ENCODE measurements at regions of chr4 and their contacts with region 1.

Region 1: DNA sequence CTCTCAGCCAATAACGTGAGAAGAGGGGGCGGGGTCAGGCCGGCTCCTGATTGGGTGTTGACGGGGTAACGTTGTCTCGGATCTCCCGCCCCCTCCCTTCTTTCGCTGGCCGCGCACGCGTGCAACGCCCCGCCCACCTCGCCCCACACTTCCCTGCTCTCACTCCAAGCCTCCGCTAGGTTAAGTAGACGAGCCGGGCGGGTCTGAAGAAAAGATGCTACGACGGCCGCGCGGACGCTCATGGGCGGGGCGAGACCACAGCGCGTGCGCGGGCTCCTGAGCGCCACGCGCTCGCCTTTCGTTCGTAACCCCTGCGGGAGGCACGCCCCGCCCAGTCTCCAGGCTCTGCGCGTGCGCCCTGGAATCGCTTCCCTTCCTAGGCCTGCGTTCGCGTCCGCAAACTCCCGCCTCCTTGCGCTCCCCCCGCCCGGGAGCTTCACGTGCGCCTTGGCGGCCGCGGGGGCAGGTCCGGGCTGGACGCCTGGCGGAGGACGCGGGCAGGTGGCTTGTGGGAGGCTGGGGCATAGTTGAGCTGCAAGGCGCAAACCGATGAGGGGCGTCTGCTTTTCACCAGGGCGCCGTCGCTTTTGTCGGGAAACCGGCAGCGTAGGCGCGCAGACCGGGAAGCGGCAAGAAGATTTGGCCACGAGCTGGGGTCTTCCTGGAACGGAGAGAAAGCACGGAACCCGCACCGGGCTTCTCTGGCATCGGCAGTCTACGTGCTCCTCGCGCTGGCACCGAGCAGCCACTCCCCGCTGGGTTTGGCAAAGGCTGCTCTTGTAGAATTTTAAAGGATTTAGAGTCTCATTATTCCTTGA is 467 bp upstream of the PGRMC2 start:
- DNase-seq: peak; percentile 97
- ATAC-seq: peak; percentile 86
- H3K4me3 ChIP-seq: peak overlapping the region; percentile 81
- H3K27ac ChIP-seq: peak overlapping the region; percentile 87
- H3K4me1 ChIP-seq: no peaks in the 10 kb centered on the region
- H3K27me3 ChIP-seq: no peaks in the 10 kb centered on the region
- CTCF ChIP-seq: peak in 1 of 3 experiments; percentile 2; a peak in 1 of 6 replicates
- EP300 ChIP-seq: 0 out of 4 replicates have a peak, but pooled peaks of 1 of the 2 experiments have one; percentile 52
- POLR2A ChIP-seq: peak; percentile 93
- RAD21 ChIP-seq: no peak

Region 2: DNA sequence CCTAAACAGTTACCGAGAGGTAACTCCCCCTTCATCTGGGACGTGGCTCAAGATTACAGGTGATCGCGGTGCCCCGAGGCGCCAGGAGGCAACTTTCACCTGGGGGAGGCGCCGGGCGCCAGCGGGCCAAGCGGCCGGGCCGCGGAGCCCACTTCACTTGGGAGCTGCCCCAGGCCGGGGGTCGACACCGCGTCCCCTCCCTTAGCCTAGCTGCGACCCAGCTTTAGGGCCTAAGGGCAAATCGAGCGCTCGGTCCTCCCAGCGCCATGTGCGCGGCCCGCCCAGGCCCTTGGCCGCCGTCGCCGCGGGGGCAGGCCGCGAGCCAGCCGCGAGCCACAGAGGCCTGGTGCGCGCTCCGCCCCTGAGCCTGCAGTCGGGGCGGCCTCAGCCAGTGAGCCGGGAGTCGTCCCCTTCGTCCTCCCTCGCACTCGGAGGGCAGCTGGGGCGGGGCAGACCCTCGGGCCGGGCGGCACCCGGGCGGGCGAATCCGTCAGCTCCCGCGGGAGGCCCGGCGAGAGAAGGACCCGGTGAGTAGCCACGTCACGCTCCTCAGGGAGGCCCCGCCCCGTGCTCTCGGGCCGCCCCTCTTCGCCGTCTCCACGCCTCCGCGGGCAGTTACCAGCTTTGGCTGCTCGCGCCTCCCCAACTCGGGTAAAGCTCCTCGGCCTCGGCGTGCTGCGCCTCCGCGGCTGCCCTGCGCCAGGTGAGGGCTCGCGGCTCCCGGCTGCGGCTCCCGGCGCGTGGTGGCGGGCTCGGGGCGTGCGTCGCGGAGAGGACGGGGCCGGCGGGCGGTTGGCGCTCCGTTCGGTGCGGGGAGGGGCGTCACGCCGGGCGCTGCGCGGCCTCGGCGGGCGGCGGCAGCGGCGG is 227.1 kb before region 1 on chr4 and contains the start of gene LARP1B:
- CTCF ChIA-PET with region 1: interaction called, 4 read pairs
- POLR2A ChIA-PET with region 1: interaction called, 3 read pairs
- RAD21 ChIA-PET with region 1: no interaction called
- SMC1A ChIA-PET with region 1: no interaction called
- in situ Hi-C with region 1: no loop called
- intact Hi-C with region 1: loop called (anchors 5 kb)
- DNase-seq: peak; percentile 74
- ATAC-seq: peak; percentile 91
- H3K4me3 ChIP-seq: peak within 1 kb of the TSS; percentile 92
- H3K27ac ChIP-seq: peak within 1 kb of the TSS; percentile 88
- H3K4me1 ChIP-seq: no peaks in the 10 kb centered on the region
- H3K27me3 ChIP-seq: no peaks in the 10 kb centered on the region
- CTCF ChIP-seq: no peak
- EP300 ChIP-seq: no peak
- POLR2A ChIP-seq: peak; percentile 93
- RAD21 ChIP-seq: no peak
- polyA plus RNA-seq, gene LARP1B: 9.3 to 12.7 TPM

Region 3: DNA sequence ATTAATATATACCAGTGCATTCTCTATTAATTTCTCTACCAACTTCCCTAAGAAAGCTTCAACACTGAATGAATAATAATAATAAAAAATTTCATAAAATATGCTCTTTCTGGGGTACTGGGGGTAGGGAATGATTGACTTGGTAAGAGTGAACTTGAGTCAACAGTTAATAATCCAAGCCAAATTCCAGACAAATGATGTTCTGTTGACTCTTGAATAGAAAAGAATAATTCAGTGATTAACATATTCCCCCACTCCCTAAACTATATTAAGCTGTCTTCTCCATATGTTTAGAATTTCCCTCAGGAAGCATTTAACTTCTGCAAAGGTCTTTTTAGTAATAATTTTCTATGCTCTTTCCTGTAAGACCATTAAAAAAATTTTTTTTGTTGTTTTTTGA is 12.7 kb before region 1 on chr4:
- CTCF ChIA-PET with region 1: interaction called, 8 read pairs
- POLR2A ChIA-PET with region 1: interaction called, 5 read pairs
- RAD21 ChIA-PET with region 1: interaction called, 3 read pairs
- SMC1A ChIA-PET with region 1: interaction called, 15 read pairs
- in situ Hi-C with region 1: no loop called
- intact Hi-C with region 1: no loop called
- DNase-seq: no peak
- ATAC-seq: no peak
- H3K4me3 ChIP-seq: no peak overlapping the region
- H3K27ac ChIP-seq: no peak overlapping the region
- H3K4me1 ChIP-seq: no peaks in the 10 kb centered on the region
- H3K27me3 ChIP-seq: no peaks in the 10 kb centered on the region
- CTCF ChIP-seq: no peak
- EP300 ChIP-seq: no peak
- POLR2A ChIP-seq: no peak
- RAD21 ChIP-seq: no peak

Measured in GM12878 (cell line).